MCF 10A (cell line): ENCODE measurements at regions of chr17 and their contacts with region 1.

Region 1: GRCh38 chr17:64306850-64307463 is 43.9 kb upstream of the TEX2 start:
- DNase-seq: peak; percentile 82
- H3K4me3 Mint-ChIP-seq: no peak overlapping the region
- H3K27ac Mint-ChIP-seq: no peak overlapping the region
- H3K4me1 Mint-ChIP-seq: no peaks in the 10 kb centered on the region
- H3K27me3 Mint-ChIP-seq: no peaks in the 10 kb centered on the region
- CTCF ChIP-seq: peak; percentile 78

Region 2: GRCh38 chr17:64320613-64321553 is 13.9 kb after region 1 on chr17:
- CTCF ChIA-PET with region 1: interaction called, 12 read pairs
- POLR2A ChIA-PET with region 1: no interaction called
- intact Hi-C with region 1: loop called (anchors 1 kb)
- DNase-seq: peak; percentile 92
- H3K4me3 Mint-ChIP-seq: no peak overlapping the region
- H3K27ac Mint-ChIP-seq: peak overlapping the region; percentile 20
- H3K4me1 Mint-ChIP-seq: peaks cover 18% of the 10 kb centered on the region
- H3K27me3 Mint-ChIP-seq: no peaks in the 10 kb centered on the region
- CTCF ChIP-seq: peak; percentile 69